ENCODE measurements at regions of chr12 and their contacts with region 1.

Region 1: GRCh38 chr12:49342066-49342913 is 4.4 kb upstream of the DNAJC22 start:
- DNase-seq: peak; percentile 76
- H3K4me3 ChIP-seq: peak overlapping the region in 2 of 3 experiments; percentile 24 to 25
- H3K27ac ChIP-seq: no peak overlapping the region
- H3K4me1 ChIP-seq: peaks cover 31% of the 10 kb centered on the region
- H3K27me3 ChIP-seq: peaks cover 50 to 71% of the 10 kb centered on the region in 2 experiments
- CTCF ChIP-seq: peak; percentile 92 to 94
- POLR2A ChIP-seq: no peak

Region 2: GRCh38 chr12:49296034-49296835 is 46.1 kb before region 1 on chr12:
- CTCF ChIA-PET with region 1: interaction called, 162 read pairs
- POLR2A ChIA-PET with region 1: no interaction called
- dilution Hi-C with region 1: no loop called
- intact Hi-C with region 1: no loop called
- DNase-seq: no peak
- H3K4me3 ChIP-seq: no peak overlapping the region
- H3K27ac ChIP-seq: no peak overlapping the region
- H3K4me1 ChIP-seq: peaks cover 3% of the 10 kb centered on the region
- H3K27me3 ChIP-seq: peaks cover 32 to 42% of the 10 kb centered on the region in 2 experiments
- CTCF ChIP-seq: peak; percentile 73 to 82
- POLR2A ChIP-seq: no peak

Region 3: GRCh38 chr12:49322708-49323523 is 19.4 kb before region 1 on chr12 and contains the start of gene TROAP:
- CTCF ChIA-PET with region 1: interaction called, 43 read pairs
- POLR2A ChIA-PET with region 1: interaction called, 7 read pairs
- dilution Hi-C with region 1: no loop called
- intact Hi-C with region 1: loop called (anchors 1 kb)
- DNase-seq: peak; percentile 99
- H3K4me3 ChIP-seq: peak within 1 kb of the TSS; percentile 59 to 90 (median 73)
- H3K27ac ChIP-seq: peak within 1 kb of the TSS; percentile 58
- H3K4me1 ChIP-seq: peaks cover 12% of the 10 kb centered on the region
- H3K27me3 ChIP-seq: no peaks in the 10 kb centered on the region
- CTCF ChIP-seq: no peak
- POLR2A ChIP-seq: peak; percentile 52
- total RNA-seq, gene TROAP: 62.4 and 68.6 TPM in 2 replicates

Region 4: DNA sequence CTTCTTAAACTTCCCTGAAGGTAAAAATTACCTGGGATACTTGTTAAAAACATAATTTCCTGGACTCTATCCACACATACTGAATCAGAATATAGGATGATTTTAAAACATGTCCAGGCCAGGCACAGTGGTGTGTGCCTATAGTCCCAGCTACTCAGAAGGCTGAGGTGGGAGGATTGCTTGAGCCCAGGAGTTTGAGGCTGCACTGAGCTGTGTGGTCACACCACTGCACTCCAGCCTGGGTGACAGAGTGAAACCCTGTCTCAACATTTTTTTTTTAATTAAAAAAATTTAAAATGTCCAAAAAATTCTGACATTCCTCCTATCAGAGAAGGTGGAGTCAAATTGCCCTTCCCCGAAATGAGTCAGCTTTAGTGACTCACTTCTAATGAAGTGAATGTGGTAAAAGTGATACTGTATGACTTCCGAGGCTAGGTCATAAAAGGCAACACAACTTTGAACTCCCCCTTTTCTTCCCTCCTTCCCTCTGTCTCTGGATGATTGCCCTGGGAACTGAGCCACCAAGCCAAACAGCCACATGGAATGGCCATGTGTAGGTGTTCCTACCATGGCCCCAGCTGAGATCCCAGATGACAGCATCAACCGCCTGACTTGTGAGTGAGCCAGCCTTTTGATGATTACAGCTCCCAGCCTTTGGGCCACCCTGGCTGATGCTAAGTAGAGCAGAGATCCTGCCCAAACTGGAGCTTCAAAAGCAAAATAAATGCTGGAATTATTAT is 904.8 kb after region 1 on chr12:
- CTCF ChIA-PET with region 1: no interaction called
- POLR2A ChIA-PET with region 1: no interaction called
- dilution Hi-C with region 1: no loop called
- intact Hi-C with region 1: no loop called
- DNase-seq: peak; percentile 79
- H3K4me3 ChIP-seq: no peak overlapping the region
- H3K27ac ChIP-seq: no peak overlapping the region
- H3K4me1 ChIP-seq: peaks cover 12% of the 10 kb centered on the region
- H3K27me3 ChIP-seq: peaks cover 12 to 15% of the 10 kb centered on the region in 2 experiments
- CTCF ChIP-seq: no peak
- POLR2A ChIP-seq: no peak